Activated CD4-positive, alpha-beta T cell treated with anti-CD3 and anti-CD28 coated beads, Interleukin-2, amount 10 ng/mL, durations not matched to agents 7 days and 5 days (primary cell): ENCODE measurements at regions of chr2 and their contacts with region 1.

Region 1: GRCh38 chr2:69455739-69456138 is 18.5 kb upstream of the NFU1 start:
- DNase-seq: no peak
- H3K4me3 Mint-ChIP-seq: no peak overlapping the region
- H3K27ac Mint-ChIP-seq: no peak overlapping the region
- H3K4me1 Mint-ChIP-seq: peaks cover 14% of the 10 kb centered on the region
- H3K27me3 Mint-ChIP-seq: no peaks in the 10 kb centered on the region

Region 2: GRCh38 chr2:69829256-69830046 is 373.7 kb after region 1 on chr2 and contains the start of gene GMCL1:
- CTCF ChIA-PET with region 1: no interaction called
- POLR2A ChIA-PET with region 1: interaction called, 11 read pairs
- DNase-seq: peak; percentile 98
- H3K4me3 Mint-ChIP-seq: peak within 1 kb of the TSS; percentile 90
- H3K27ac Mint-ChIP-seq: peak within 1 kb of the TSS; percentile 97
- H3K4me1 Mint-ChIP-seq: peaks cover 58% of the 10 kb centered on the region
- H3K27me3 Mint-ChIP-seq: no peaks in the 10 kb centered on the region
- total RNA-seq, gene GMCL1: 19.4 to 24.9 TPM